ENCODE measurements at regions of chr6 and their contacts with region 1.

Region 1: GRCh38 chr6:131116749-131117360 is 18.4 kb upstream of the AKAP7 start:
- DNase-seq: no peak
- ATAC-seq: peak; percentile 83
- H3K4me3 ChIP-seq: no peak overlapping the region
- H3K27ac ChIP-seq: no peak overlapping the region
- H3K4me1 ChIP-seq: no peaks in the 10 kb centered on the region
- H3K27me3 ChIP-seq: no peaks in the 10 kb centered on the region
- CTCF ChIP-seq: peak; percentile 2 to 51 (median 31); a peak in 3 of 6 replicates
- EP300 ChIP-seq: no peak
- POLR2A ChIP-seq: no peak
- RAD21 ChIP-seq: peak; percentile 85

Region 2: GRCh38 chr6:130872250-130873095 is 244.4 kb before region 1 on chr6:
- CTCF ChIA-PET with region 1: interaction called, 10 read pairs
- POLR2A ChIA-PET with region 1: interaction called, 5 read pairs
- RAD21 ChIA-PET with region 1: no interaction called
- SMC1A ChIA-PET with region 1: interaction called, 12 read pairs
- in situ Hi-C with region 1: no loop called
- intact Hi-C with region 1: no loop called
- DNase-seq: no peak
- ATAC-seq: peak; percentile 93
- H3K4me3 ChIP-seq: no peak overlapping the region
- H3K27ac ChIP-seq: no peak overlapping the region
- H3K4me1 ChIP-seq: no peaks in the 10 kb centered on the region
- H3K27me3 ChIP-seq: no peaks in the 10 kb centered on the region
- CTCF ChIP-seq: peak; percentile 81 to 92 (median 90)
- EP300 ChIP-seq: no peak
- POLR2A ChIP-seq: no peak
- RAD21 ChIP-seq: peak; percentile 66

Region 3: DNA sequence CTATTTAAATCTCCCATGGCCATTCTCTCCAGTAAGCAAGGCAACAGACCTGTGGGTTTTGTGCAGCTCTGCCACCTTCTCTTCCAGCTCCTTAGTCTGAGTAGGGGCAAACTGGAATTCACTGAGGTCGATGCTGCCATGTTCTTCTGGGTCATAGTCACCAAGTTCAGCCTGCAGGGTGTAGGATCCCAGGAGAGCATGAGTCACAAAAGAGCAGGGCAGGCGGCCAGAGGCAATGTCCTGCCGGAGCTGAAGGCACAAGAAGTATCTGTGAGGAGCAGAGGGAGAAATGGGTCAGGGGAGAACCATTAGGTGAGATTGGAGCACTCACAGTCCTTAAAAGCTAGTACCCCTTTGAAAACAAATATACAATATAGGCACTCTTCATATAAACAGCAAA is 215.9 kb before region 1 on chr6:
- CTCF ChIA-PET with region 1: interaction called, 10 read pairs
- POLR2A ChIA-PET with region 1: no interaction called
- RAD21 ChIA-PET with region 1: interaction called, 3 read pairs
- SMC1A ChIA-PET with region 1: interaction called, 301 read pairs
- in situ Hi-C with region 1: no loop called
- intact Hi-C with region 1: no loop called
- DNase-seq: no peak
- ATAC-seq: no peak
- H3K4me3 ChIP-seq: no peak overlapping the region
- H3K27ac ChIP-seq: no peak overlapping the region
- H3K4me1 ChIP-seq: no peaks in the 10 kb centered on the region
- H3K27me3 ChIP-seq: no peaks in the 10 kb centered on the region
- CTCF ChIP-seq: no peak
- EP300 ChIP-seq: no peak
- POLR2A ChIP-seq: no peak
- RAD21 ChIP-seq: no peak

Region 4: GRCh38 chr6:130945401-130945919 is 171.4 kb before region 1 on chr6:
- CTCF ChIA-PET with region 1: no interaction called
- POLR2A ChIA-PET with region 1: no interaction called
- RAD21 ChIA-PET with region 1: no interaction called
- SMC1A ChIA-PET with region 1: no interaction called
- in situ Hi-C with region 1: no loop called
- intact Hi-C with region 1: loop called (anchors 5 kb)
- DNase-seq: no peak
- ATAC-seq: no peak; the same call in 2 of the 3 replicates
- H3K4me3 ChIP-seq: no peak overlapping the region
- H3K27ac ChIP-seq: no peak overlapping the region; the same call in 1 of the 2 replicates
- H3K4me1 ChIP-seq: no peaks in the 10 kb centered on the region
- H3K27me3 ChIP-seq: no peaks in the 10 kb centered on the region
- CTCF ChIP-seq: no peak
- EP300 ChIP-seq: no peak
- POLR2A ChIP-seq: no peak
- RAD21 ChIP-seq: no peak

Region 5: DNA sequence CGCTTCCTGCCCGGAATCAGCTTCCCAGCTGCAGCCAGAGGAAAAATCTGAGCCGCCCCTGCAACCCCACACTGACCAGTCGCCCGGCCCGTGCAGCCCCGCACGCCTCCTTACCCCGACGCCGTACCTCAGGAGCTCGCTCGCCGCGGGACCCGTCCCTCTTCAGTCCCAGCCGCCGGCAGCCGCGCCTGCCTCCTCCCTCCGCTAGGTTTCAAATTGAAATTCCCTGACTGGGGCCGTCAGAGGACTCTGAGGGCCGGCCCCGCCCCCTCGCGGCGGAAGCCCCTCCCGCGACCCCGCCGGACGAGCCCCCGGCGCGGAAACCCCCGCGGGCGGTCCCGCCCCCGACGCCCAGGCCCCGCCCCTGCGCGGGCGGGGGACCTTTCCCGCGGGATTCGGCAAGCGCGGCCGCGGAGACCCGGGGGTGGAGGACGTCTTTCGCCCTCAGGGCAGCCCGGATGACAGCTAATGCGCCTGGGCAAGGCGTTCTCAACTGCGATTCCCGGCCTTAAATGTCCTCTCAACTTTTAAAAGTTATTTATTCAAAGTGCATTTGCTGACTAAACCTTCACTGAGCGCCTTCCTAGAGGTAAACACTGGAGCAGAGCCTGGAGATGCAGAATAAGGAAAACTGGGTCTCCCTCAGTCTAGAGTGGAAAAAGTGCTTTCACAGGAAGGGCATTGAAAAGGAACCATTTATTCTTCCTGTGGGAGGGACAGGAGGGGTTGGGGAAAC is 53.7 kb before region 1 on chr6 and contains the start of gene EPB41L2:
- CTCF ChIA-PET with region 1: interaction called, 3 read pairs
- POLR2A ChIA-PET with region 1: no interaction called
- RAD21 ChIA-PET with region 1: interaction called, 9 read pairs
- SMC1A ChIA-PET with region 1: interaction called, 12 read pairs
- in situ Hi-C with region 1: no loop called
- intact Hi-C with region 1: no loop called
- DNase-seq: peak; percentile 26
- ATAC-seq: peak; percentile 82
- H3K4me3 ChIP-seq: peak within 1 kb of the TSS; percentile 88
- H3K27ac ChIP-seq: peak within 1 kb of the TSS; percentile 67
- H3K4me1 ChIP-seq: peaks cover 6% of the 10 kb centered on the region
- H3K27me3 ChIP-seq: no peaks in the 10 kb centered on the region
- CTCF ChIP-seq: no peak
- EP300 ChIP-seq: no peak
- POLR2A ChIP-seq: peak; percentile 92
- RAD21 ChIP-seq: 0 out of 2 replicates have a peak, but pooled peaks have one; percentile 14
- polyA plus RNA-seq, gene EPB41L2: 7.4 to 10.3 TPM

Region 6: GRCh38 chr6:131433927-131434326 is 317.1 kb after region 1 on chr6:
- CTCF ChIA-PET with region 1: no interaction called
- POLR2A ChIA-PET with region 1: no interaction called
- RAD21 ChIA-PET with region 1: no interaction called
- SMC1A ChIA-PET with region 1: no interaction called
- in situ Hi-C with region 1: no loop called
- intact Hi-C with region 1: no loop called
- DNase-seq: no peak
- ATAC-seq: no peak
- H3K4me3 ChIP-seq: no peak overlapping the region
- H3K27ac ChIP-seq: no peak overlapping the region
- H3K4me1 ChIP-seq: no peaks in the 10 kb centered on the region
- H3K27me3 ChIP-seq: no peaks in the 10 kb centered on the region
- CTCF ChIP-seq: no peak
- EP300 ChIP-seq: no peak
- POLR2A ChIP-seq: no peak
- RAD21 ChIP-seq: no peak

Region 7: DNA sequence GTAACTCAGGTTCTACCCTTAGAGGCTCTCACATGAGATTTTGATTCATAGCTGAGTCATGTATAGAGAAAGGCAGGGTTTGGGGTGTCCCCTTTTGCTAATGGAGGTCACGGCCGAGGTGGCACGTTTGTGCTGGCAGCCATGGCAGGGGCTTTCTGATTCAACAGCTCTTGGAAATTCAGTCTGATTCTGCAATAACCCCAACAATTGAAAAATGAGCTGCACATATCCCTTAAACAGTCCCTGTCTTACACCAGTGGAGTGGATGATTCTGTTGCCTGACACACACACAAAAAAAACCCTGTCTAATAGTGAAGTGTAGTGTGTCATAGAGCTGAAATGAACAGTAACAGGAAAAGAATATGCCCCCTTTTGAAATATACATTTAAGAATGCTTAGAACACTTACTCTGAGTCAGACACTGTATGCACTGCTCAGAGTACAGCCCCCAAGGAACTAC is 415.8 kb after region 1 on chr6:
- CTCF ChIA-PET with region 1: interaction called, 4 read pairs
- POLR2A ChIA-PET with region 1: no interaction called
- RAD21 ChIA-PET with region 1: interaction called, 12 read pairs
- SMC1A ChIA-PET with region 1: interaction called, 11 read pairs
- in situ Hi-C with region 1: no loop called
- intact Hi-C with region 1: no loop called
- DNase-seq: peak; percentile 23
- ATAC-seq: peak; percentile 93
- H3K4me3 ChIP-seq: no peak overlapping the region
- H3K27ac ChIP-seq: no peak overlapping the region
- H3K4me1 ChIP-seq: no peaks in the 10 kb centered on the region
- H3K27me3 ChIP-seq: no peaks in the 10 kb centered on the region
- CTCF ChIP-seq: no peak
- EP300 ChIP-seq: no peak
- POLR2A ChIP-seq: no peak
- RAD21 ChIP-seq: no peak

Measured in GM12878 (cell line).